ENCODE measurements at regions of chr1 and their contacts with region 1.

Region 1: DNA sequence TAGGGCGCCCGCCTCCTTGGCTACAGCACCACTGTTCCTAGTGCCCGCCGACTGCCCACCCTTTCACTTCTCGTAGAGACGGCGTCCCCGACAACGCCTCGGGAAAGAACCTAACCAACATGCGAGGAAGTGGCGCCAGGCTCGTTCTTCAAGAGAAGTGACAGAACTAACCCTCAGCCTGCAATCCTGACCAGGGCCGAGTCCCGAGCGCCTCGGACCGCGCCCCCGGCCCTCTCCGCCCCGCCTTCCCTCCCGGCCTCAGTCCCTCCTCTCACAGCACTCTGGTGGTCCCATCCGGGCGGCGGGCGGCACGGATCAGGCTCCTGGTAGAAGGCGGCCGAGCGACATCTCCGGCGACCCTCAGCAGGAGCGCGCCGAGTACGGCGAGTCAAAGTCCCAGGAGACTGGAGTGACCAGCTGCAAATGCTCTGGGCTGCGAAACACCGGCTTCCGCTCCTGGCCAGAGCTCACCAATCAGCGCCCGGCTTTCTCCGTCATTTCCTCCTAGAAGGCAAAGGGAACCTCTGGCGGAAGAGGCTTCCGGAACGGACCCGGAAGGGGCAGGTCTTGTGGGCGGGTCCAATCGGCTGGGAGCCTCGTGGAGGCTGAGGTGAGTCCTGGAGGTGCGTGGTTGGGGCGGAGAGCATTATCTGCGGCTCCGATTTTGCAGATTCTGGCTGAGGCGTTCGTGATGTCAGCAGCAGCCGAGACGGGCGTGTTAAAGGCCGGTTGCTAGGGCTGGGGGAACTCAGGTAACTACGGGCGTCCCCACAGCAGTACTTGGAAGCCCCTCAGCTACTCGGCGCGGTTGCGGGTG is at the starts of genes GDAP2 and WDR3:
- DNase-seq: peak; percentile 96
- ATAC-seq: peak; percentile 89
- H3K4me3 ChIP-seq: peak within 1 kb of the TSS; percentile 89
- H3K27ac ChIP-seq: peak within 1 kb of the TSS; percentile 79
- H3K4me1 ChIP-seq: 0 out of 2 replicates have a peak, but pooled peaks cover 3% of the 10 kb centered on the region
- H3K27me3 ChIP-seq: no peaks in the 10 kb centered on the region
- CTCF ChIP-seq: no peak
- POLR2A ChIP-seq: 0 out of 2 replicates have a peak, but pooled peaks have one; percentile 49
- RAD21 ChIP-seq: no peak
- total RNA-seq, gene GDAP2: 26.7 and 27.1 TPM in 2 replicates
- total RNA-seq, gene WDR3: 74.7 and 88.5 TPM in 2 replicates

Region 2: DNA sequence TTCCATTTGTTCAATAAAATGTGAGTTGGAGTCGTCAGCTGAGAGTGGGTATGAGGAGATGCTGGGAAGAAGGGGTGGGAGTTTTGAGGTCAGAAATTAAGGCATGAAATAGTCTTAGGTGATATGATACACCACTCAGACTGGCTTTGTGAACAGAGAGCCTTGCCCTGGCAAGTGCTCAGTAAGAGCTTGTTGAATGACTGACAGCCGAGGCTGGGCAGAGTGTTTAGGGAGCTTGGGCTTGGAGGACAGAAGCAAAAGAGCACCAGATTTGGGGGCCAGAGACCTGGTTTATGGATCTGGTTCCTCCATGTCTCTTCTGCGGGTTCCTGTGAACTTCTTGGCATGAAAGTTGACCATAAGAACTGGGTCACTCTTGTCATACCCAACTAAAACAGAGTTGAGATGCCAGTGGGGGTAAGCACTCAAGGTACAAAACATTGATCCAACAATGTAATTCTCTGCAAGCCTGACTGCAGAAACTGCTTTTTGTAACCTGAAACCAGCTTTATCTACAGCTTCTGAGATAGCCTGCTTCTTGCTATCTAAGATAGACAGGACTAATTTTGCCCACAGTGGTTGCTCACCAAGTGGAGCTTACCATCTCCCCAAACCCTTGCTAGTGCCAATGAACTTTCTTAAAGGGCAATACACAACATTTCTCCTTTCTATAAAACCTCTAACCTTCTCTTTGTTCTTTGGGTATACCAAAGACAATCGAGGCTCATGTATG is 197.2 kb before region 1 on chr1:
- CTCF ChIA-PET with region 1: no interaction called
- POLR2A ChIA-PET with region 1: no interaction called
- dilution Hi-C with region 1: no loop called
- in situ Hi-C with region 1: no loop called
- intact Hi-C with region 1: no loop called
- DNase-seq: peak; percentile 49
- ATAC-seq: peak; percentile 42; the same call in 1 of the 2 replicates
- H3K4me3 ChIP-seq: no peak overlapping the region
- H3K27ac ChIP-seq: no peak overlapping the region
- H3K4me1 ChIP-seq: peaks cover 4% of the 10 kb centered on the region; the same call in 1 of the 2 replicates
- H3K27me3 ChIP-seq: no peaks in the 10 kb centered on the region
- CTCF ChIP-seq: no peak
- POLR2A ChIP-seq: no peak
- RAD21 ChIP-seq: no peak

Region 3: DNA sequence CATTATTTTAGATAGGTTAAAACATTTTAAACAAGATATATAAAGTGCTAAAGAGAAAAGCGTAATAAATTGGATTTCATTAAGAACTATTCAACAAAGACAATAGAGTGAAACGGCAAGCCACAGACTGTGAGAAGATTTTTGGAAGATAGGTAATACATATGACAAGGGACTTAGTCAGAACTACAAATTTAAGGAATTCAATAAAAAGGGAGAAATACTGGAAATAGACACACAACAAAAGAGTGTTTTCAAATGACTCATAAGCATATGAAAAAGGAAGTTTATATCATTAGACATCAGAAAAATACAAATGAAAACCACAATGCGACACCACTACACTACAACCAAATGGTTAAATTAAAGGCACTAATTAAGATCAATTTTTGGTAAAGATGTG is 90.5 kb before region 1 on chr1:
- CTCF ChIA-PET with region 1: no interaction called
- POLR2A ChIA-PET with region 1: interaction called, 10 read pairs
- dilution Hi-C with region 1: no loop called
- in situ Hi-C with region 1: no loop called
- intact Hi-C with region 1: no loop called
- DNase-seq: peak; percentile 85
- ATAC-seq: peak; percentile 68
- H3K4me3 ChIP-seq: no peak overlapping the region
- H3K27ac ChIP-seq: peak overlapping the region; percentile 38; the same call in 1 of the 2 replicates
- H3K4me1 ChIP-seq: peaks cover 8% of the 10 kb centered on the region
- H3K27me3 ChIP-seq: no peaks in the 10 kb centered on the region
- CTCF ChIP-seq: no peak
- POLR2A ChIP-seq: no peak
- RAD21 ChIP-seq: no peak

Region 4: GRCh38 chr1:117871013-117871412 is 58.4 kb before region 1 on chr1:
- CTCF ChIA-PET with region 1: no interaction called
- POLR2A ChIA-PET with region 1: no interaction called
- dilution Hi-C with region 1: no loop called
- in situ Hi-C with region 1: no loop called
- intact Hi-C with region 1: loop called (anchors 1 kb)
- DNase-seq: no peak
- ATAC-seq: no peak
- H3K4me3 ChIP-seq: no peak overlapping the region
- H3K27ac ChIP-seq: no peak overlapping the region
- H3K4me1 ChIP-seq: no peaks in the 10 kb centered on the region
- H3K27me3 ChIP-seq: no peaks in the 10 kb centered on the region
- CTCF ChIP-seq: no peak
- POLR2A ChIP-seq: no peak
- RAD21 ChIP-seq: no peak

Region 5: DNA sequence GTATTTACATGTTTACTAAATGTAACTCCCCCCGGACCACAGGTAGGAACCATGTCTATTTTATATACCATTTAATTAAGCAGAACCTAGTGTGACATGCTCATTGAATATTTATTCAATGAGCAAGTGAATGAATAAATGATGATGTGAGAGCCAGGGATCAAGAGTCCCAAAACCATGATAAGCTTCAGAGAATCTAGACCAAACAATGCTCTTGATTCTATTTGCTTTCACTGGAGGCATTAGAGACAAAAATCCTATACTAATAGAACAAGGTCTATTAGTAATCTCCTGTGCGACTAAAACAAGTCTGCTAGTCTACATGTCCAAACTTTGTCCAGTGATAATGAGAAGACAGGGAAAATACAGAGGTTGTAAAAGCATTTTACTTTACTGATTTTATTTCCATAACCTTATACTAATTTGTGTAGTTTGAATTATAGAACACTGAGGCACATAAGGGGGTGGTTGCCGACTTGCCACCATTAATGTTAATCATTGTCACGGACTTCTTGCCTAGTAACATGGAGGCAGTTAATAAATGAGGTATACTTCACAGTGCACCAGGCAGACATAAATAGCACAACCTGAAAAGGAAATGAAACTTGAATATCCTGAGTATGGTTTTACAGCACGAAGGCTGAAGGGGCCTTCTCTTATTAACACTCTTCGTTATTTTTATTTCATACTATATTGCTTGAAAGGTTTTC is 989.0 kb after region 1 on chr1:
- CTCF ChIA-PET with region 1: no interaction called
- POLR2A ChIA-PET with region 1: no interaction called
- dilution Hi-C with region 1: no loop called
- in situ Hi-C with region 1: no loop called
- intact Hi-C with region 1: no loop called
- DNase-seq: no peak
- ATAC-seq: no peak
- H3K4me3 ChIP-seq: no peak overlapping the region
- H3K27ac ChIP-seq: no peak overlapping the region
- H3K4me1 ChIP-seq: no peaks in the 10 kb centered on the region
- H3K27me3 ChIP-seq: no peaks in the 10 kb centered on the region
- CTCF ChIP-seq: no peak
- POLR2A ChIP-seq: no peak
- RAD21 ChIP-seq: no peak

Region 6: DNA sequence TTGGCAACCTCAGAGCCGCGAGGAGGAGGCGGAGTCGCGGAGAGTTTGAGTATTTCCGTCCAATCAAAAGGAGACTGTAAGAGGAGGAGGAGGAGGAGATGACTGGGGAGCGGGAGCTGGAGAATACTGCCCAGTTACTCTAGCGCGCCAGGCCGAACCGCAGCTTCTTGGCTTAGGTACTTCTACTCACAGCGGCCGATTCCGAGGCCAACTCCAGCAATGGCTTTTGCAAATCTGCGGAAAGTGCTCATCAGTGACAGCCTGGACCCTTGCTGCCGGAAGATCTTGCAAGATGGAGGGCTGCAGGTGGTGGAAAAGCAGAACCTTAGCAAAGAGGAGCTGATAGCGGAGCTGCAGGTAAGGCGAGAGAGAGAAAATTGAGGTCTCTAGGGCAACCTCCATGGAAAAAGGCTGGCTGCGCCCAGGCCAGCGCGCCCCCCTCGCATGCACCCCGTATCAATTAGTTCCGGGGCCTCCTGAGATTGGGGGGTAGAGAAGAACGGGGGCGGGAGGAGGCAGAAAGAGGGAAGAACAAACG is 1782.5 kb after region 1 on chr1 and contains the start of gene PHGDH:
- CTCF ChIA-PET with region 1: no interaction called
- POLR2A ChIA-PET with region 1: no interaction called
- dilution Hi-C with region 1: no loop called
- in situ Hi-C with region 1: no loop called
- intact Hi-C with region 1: loop called (anchors 5 kb)
- DNase-seq: peak; percentile 90
- ATAC-seq: peak; percentile 79
- H3K4me3 ChIP-seq: peak within 1 kb of the TSS; percentile 78
- H3K27ac ChIP-seq: peak within 1 kb of the TSS; percentile 84
- H3K4me1 ChIP-seq: peaks cover 19% of the 10 kb centered on the region
- H3K27me3 ChIP-seq: peaks cover 11% of the 10 kb centered on the region
- CTCF ChIP-seq: no peak
- POLR2A ChIP-seq: peak; percentile 87
- RAD21 ChIP-seq: no peak
- total RNA-seq, gene PHGDH: 162 and 331 TPM in 2 replicates